Activated T-helper 1 cell treated with anti-CD3 and anti-CD28 coated beads, Interleukin-12 subunit alpha, Interleukin-12 subunit beta, Interleukin-2, Interleukin-4 antibody, amounts not matched to agents 30 ng/mL and 10 ng/mL and 1 ng/mL, durations not matched to agents 14 hours and 24 hours and 36 hours (primary cell): ENCODE measurements at regions of chr2 and their contacts with region 1.

Region 1: DNA sequence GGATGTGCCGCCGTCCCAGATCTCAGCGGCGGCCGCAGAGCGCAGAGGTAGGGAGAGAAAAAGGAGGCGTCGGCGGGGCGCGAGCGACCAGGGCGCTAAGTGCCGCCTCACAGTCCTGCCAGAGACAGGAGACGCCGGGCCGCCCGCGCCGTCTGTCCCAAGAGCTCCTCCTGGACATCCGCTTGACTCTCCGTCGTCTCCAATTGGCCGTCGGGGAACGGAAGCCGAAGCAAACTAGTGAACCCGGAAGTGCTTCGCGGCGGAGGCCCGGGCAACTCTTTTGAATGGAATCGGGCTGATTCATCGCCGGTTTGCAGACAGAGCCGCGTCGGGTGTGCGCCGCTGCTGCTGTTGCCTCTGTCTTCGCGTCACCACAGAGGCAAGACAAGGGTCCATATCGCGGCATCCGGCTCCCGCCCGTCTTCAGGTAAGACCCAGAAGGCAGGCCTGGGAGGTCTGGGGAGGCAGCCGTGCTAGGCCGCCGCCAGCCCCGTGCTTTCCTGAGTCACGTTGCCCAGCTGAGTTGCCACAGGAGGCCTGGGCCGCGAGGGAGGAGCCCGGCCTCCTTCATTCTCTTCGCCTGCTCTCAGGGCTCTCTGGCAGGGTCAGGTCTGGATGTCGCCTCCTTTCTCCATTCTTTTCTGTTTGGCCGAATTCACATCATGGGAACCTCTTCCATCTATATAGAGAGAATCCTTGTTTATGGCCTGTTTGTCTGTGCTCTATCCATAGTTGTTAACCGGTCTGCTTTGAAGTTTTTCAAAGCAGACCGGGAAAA is at the start of gene PSMD14:
- DNase-seq: peak; percentile 90
- H3K4me3 Mint-ChIP-seq: peak within 1 kb of the TSS; percentile 91
- H3K27ac Mint-ChIP-seq: peak within 1 kb of the TSS; percentile 94
- H3K4me1 Mint-ChIP-seq: peaks cover 33% of the 10 kb centered on the region
- H3K27me3 Mint-ChIP-seq: peaks cover 5% of the 10 kb centered on the region
- total RNA-seq, gene PSMD14: 103 and 113 TPM in 2 replicates

Region 2: DNA sequence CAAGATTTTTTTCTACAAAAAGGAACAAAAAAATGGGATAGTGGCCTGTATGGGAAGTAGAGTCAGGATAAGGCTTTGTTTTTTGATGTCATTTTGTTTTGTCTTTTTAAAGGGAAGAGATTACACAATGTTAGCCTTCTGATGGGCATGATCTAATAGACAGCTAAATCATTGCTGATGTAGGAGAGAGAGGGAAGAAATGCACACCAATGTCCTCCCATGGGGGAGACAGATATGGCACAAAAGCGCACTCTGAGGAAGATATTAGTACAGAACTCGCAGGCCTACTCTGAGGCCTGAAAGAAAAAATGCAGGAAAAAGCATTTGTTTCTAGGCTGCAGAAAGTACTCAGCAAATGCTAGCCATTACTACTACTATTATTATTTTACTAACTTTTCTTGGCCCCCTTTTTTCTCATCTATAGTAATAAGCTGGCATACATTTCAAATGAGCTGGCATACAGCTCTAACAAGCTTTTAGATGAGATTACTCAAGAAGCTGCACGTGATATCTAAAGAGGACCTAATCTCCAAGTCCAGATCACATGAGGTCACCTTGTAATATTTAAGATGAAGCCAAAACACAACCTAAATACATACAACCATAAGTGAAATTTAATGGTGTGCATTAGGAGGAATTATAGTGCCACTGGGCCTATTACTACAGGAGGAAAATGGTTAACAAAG is 417.6 kb before region 1 on chr2:
- intact Hi-C with region 1: no loop called
- DNase-seq: no peak
- H3K4me3 Mint-ChIP-seq: no peak overlapping the region
- H3K27ac Mint-ChIP-seq: no peak overlapping the region
- H3K4me1 Mint-ChIP-seq: no peaks in the 10 kb centered on the region
- H3K27me3 Mint-ChIP-seq: peaks cover 2% of the 10 kb centered on the region

Region 3: GRCh38 chr2:161160226-161161069 is 147.9 kb before region 1 on chr2 and contains the start of gene TANK:
- intact Hi-C with region 1: loop called (anchors 1 kb)
- DNase-seq: peak; percentile 88
- H3K4me3 Mint-ChIP-seq: peak within 1 kb of the TSS; percentile 97
- H3K27ac Mint-ChIP-seq: peak within 1 kb of the TSS; percentile 99
- H3K4me1 Mint-ChIP-seq: peaks cover 81% of the 10 kb centered on the region
- H3K27me3 Mint-ChIP-seq: no peaks in the 10 kb centered on the region
- total RNA-seq, gene TANK: 136 and 141 TPM in 2 replicates

Region 4: DNA sequence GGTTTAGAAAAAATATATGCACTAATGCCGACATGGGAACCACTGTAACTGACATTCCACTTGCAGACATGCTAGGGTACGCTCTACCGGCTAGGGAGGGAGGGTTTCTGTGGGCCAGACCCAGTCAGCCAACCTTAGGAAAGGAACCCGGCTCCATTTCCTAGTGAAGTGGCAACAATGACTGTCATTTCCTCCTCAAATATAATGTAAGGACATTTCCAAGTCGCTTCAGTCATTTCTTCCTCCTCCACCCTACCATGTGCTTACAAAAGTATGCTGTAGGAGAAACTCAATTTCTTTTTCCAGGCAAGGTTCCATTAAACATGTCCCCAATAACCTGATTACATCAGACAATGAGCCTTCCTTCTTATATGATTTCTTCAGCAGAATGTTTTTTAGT is 64.5 kb before region 1 on chr2:
- intact Hi-C with region 1: loop called (anchors 2 kb)
- DNase-seq: no peak
- H3K4me3 Mint-ChIP-seq: peak overlapping the region; percentile 87
- H3K27ac Mint-ChIP-seq: peak overlapping the region; percentile 96
- H3K4me1 Mint-ChIP-seq: peaks cover 65% of the 10 kb centered on the region
- H3K27me3 Mint-ChIP-seq: no peaks in the 10 kb centered on the region

Region 5: GRCh38 chr2:161357097-161357496 is 48.7 kb after region 1 on chr2:
- intact Hi-C with region 1: no loop called
- DNase-seq: no peak
- H3K4me3 Mint-ChIP-seq: no peak overlapping the region
- H3K27ac Mint-ChIP-seq: no peak overlapping the region
- H3K4me1 Mint-ChIP-seq: peaks cover 14% of the 10 kb centered on the region
- H3K27me3 Mint-ChIP-seq: no peaks in the 10 kb centered on the region

Region 6: GRCh38 chr2:161384864-161385263 is 76.5 kb after region 1 on chr2:
- intact Hi-C with region 1: loop called (anchors 2 kb)
- DNase-seq: peak; percentile 36
- H3K4me3 Mint-ChIP-seq: no peak overlapping the region
- H3K27ac Mint-ChIP-seq: no peak overlapping the region
- H3K4me1 Mint-ChIP-seq: peaks cover 27% of the 10 kb centered on the region
- H3K27me3 Mint-ChIP-seq: no peaks in the 10 kb centered on the region

Region 7: GRCh38 chr2:161586517-161587167 is 278.3 kb after region 1 on chr2:
- intact Hi-C with region 1: no loop called
- DNase-seq: no peak
- H3K4me3 Mint-ChIP-seq: no peak overlapping the region
- H3K27ac Mint-ChIP-seq: no peak overlapping the region
- H3K4me1 Mint-ChIP-seq: peaks cover 4% of the 10 kb centered on the region
- H3K27me3 Mint-ChIP-seq: peaks cover 26% of the 10 kb centered on the region

Region 8: DNA sequence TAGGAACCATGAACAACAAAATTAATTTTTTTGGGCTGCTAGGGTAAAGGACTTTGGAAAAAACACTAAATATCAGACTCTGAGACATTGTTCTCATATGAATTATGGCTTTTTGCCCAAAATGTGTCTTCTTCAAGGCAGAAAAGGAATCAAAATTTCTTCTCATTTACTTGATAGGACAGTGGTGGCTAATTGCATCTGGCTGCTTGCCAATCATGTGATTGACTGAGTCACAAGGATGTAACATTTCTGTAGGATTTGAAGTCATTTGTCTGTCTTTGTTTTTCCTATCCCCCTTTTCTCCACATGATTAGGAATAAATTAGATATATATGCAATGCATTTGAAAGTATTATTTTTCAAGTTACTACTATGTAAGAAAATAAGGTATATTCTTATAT is 446.0 kb after region 1 on chr2:
- intact Hi-C with region 1: no loop called
- DNase-seq: no peak
- H3K4me3 Mint-ChIP-seq: no peak overlapping the region
- H3K27ac Mint-ChIP-seq: no peak overlapping the region
- H3K4me1 Mint-ChIP-seq: no peaks in the 10 kb centered on the region
- H3K27me3 Mint-ChIP-seq: peaks cover 9% of the 10 kb centered on the region

Region 9: DNA sequence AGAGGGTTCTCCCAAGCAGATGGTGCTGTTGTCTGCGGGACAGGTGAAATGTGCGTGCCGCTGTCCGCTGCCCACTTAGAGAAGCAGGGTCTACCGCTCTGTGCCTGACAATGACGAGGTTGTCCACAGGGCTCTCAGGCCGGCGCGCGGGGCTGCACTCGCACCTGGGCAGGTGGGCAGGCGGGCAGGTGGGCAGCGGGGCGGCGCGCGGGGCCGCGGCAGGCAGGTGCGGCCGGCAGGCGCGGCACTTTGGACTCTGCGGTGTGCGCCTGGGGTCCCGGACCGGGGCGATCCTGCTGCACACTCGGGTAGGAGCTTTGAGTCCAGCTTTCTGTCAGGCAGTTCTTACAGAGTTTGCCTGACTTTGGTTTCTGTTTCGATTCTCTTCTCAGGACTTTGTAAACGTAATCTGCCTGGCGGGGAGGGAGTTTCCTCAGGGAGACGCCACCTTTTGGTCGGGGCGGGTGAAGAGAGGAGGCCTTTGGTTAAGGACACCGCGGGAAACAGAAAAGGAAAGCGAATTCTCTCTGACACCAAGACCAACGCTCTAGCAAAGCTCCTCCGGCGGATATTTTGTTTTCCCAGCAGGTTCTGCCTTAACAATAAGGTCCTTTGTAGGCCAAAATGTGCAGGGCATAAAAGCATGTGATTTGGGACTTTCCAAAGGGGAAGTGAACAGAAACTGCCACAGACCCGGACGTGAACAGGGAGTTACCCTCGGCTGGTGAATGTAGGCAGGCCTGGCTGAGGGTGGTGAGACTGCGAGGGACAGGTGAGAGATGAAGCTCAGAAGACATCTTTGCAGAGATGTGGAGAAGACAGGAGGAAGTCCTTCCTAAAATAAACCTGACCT is 1010.2 kb after region 1 on chr2 and contains the start of gene IFIH1:
- intact Hi-C with region 1: loop called (anchors 2 kb)
- DNase-seq: peak; percentile 79
- H3K4me3 Mint-ChIP-seq: peak within 1 kb of the TSS; percentile 93
- H3K27ac Mint-ChIP-seq: peak within 1 kb of the TSS; percentile 100
- H3K4me1 Mint-ChIP-seq: peaks cover 65% of the 10 kb centered on the region
- H3K27me3 Mint-ChIP-seq: no peaks in the 10 kb centered on the region
- total RNA-seq, gene IFIH1: 27.9 TPM in 2 replicates

Region 10: GRCh38 chr2:162343824-162344616 is 1035.7 kb after region 1 on chr2 and contains the start of gene GCA:
- intact Hi-C with region 1: loop called (anchors 1 kb)
- DNase-seq: peak; percentile 97
- H3K4me3 Mint-ChIP-seq: peak within 1 kb of the TSS; percentile 94
- H3K27ac Mint-ChIP-seq: peak within 1 kb of the TSS; percentile 77
- H3K4me1 Mint-ChIP-seq: peaks cover 16% of the 10 kb centered on the region
- H3K27me3 Mint-ChIP-seq: peaks cover 19% of the 10 kb centered on the region
- total RNA-seq, gene GCA: 14.5 and 14.9 TPM in 2 replicates